Left colon (tissue), 2 donors: ENCODE measurements at regions of chr17 and their contacts with region 1.

Region 1: GRCh38 chr17:66906321-66907278 is 57.9 kb upstream of the CACNG4 start:
- DNase-seq: peak; percentile 77 to 89
- ATAC-seq: peak; percentile 78

Region 2: GRCh38 chr17:66715745-66716156 is 190.8 kb before region 1 on chr17:
- intact Hi-C with region 1: loop called (anchors 5 kb)
- DNase-seq: no peak
- ATAC-seq: peak; percentile 62

Region 3: GRCh38 chr17:67055811-67056745 is 149.5 kb after region 1 on chr17:
- intact Hi-C with region 1: no loop called
- DNase-seq: peak; percentile 56 to 76
- ATAC-seq: peak; percentile 96